ENCODE measurements at regions of chr1 and their contacts with region 1.

Region 1: DNA sequence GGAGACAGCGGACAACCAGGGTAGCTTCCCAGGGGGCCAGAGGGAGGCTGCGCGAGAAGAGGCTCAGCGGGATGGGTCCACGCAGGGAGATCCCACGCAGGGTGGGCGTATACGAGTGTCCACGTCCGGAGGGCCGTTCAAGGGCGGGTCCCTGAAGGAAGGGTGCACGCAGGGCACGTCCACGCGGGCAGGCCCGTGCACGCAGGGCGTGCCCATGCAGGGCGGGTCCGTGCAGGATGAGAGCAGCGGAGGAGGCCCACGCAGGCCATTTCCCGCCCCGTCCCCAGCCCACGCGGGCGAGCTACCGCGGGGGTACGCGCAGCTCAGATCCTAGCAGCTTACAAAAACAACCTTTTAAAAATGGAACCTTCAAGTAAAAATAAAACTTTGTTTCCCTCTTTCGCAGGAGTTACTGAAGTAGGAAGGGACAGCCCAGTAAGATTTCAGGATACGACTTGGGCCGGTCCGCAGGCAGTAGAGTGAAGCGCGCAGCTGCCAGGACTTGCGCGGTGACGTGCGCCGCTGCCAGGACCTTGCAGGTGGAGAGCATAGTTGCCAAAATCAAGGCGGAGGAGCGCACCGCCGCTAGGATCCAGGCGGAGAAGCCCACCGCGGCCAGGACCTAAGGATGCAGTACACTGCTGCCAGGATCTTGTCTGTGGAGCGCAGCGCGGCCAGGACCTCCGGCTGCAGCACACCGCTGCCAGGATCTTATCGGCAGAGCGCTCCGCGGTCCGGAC is 416 bp upstream of the RNF187 start:
- DNase-seq: peak; percentile 66 to 91 (median 78)
- ATAC-seq: peak; percentile 77
- H3K4me3 ChIP-seq: peak overlapping the region; percentile 85
- H3K4me3 Mint-ChIP-seq: peak overlapping the region; percentile 95
- H3K27ac ChIP-seq: peak overlapping the region; percentile 100
- H3K27ac Mint-ChIP-seq: peak overlapping the region; percentile 100
- H3K4me1 ChIP-seq: peaks cover 43% of the 10 kb centered on the region
- H3K4me1 Mint-ChIP-seq: peaks cover 43% of the 10 kb centered on the region
- H3K27me3 ChIP-seq: no peaks in the 10 kb centered on the region
- H3K27me3 Mint-ChIP-seq: no peaks in the 10 kb centered on the region
- CTCF ChIP-seq: no peak

Region 2: GRCh38 chr1:228212966-228213844 is 273.6 kb before region 1 on chr1:
- CTCF ChIA-PET with region 1: no interaction called
- POLR2A ChIA-PET with region 1: interaction called, 3 read pairs
- intact Hi-C with region 1: loop called in 1 of 2 experiments (anchors 2 kb)
- DNase-seq: peak; percentile 83 to 96 (median 90)
- ATAC-seq: peak; percentile 89
- H3K4me3 ChIP-seq: peak overlapping the region; percentile 64
- H3K4me3 Mint-ChIP-seq: peak overlapping the region; percentile 92
- H3K27ac ChIP-seq: peak overlapping the region in 1 of 2 donors; percentile 21
- H3K27ac Mint-ChIP-seq: peak overlapping the region; percentile 86
- H3K4me1 ChIP-seq: peaks cover 22% of the 10 kb centered on the region
- H3K4me1 Mint-ChIP-seq: peaks cover 12% of the 10 kb centered on the region
- H3K27me3 ChIP-seq: no peaks in the 10 kb centered on the region
- H3K27me3 Mint-ChIP-seq: no peaks in the 10 kb centered on the region
- CTCF ChIP-seq: peak; percentile 59

Region 3: GRCh38 chr1:228226956-228227791 is 259.6 kb before region 1 on chr1:
- CTCF ChIA-PET with region 1: no interaction called
- POLR2A ChIA-PET with region 1: no interaction called
- intact Hi-C with region 1: no loop called
- DNase-seq: no peak
- ATAC-seq: no peak
- H3K4me3 ChIP-seq: no peak overlapping the region
- H3K4me3 Mint-ChIP-seq: no peak overlapping the region
- H3K27ac ChIP-seq: no peak overlapping the region
- H3K27ac Mint-ChIP-seq: no peak overlapping the region
- H3K4me1 ChIP-seq: no peaks in the 10 kb centered on the region
- H3K4me1 Mint-ChIP-seq: peaks cover 8% of the 10 kb centered on the region
- H3K27me3 ChIP-seq: no peaks in the 10 kb centered on the region
- H3K27me3 Mint-ChIP-seq: no peaks in the 10 kb centered on the region
- CTCF ChIP-seq: no peak

Region 4: DNA sequence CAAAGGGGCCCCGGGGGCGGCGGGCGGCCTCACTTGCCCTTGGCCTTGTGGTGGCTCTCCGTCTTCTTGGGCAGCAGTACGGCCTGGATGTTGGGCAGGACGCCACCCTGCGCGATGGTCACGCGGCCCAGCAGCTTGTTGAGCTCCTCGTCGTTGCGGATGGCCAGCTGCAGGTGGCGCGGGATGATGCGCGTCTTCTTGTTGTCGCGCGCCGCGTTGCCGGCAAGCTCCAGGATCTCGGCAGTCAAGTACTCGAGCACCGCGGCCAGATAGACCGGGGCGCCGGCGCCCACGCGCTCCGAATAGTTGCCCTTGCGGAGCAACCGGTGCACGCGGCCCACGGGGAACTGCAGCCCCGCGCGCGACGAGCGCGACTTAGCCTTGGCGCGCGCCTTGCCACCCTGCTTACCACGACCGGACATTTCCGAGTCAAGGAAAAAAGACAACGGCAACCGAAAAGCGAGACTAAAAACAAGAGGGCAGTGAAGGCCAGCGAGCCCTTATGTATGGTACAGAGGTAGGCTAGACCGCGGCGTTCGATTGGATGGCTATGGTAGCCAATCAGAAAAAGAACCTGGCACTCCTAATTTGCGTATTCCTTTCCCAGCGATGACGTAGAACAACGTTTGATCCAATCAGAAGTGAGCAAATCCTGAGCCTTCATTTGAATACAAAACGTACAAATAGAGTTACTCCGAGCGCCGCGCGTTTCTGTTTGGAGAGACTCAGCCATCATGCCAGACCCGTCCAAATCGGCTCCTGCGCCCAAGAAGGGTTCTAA is 29.2 kb before region 1 on chr1:
- CTCF ChIA-PET with region 1: interaction called, 30 read pairs
- POLR2A ChIA-PET with region 1: interaction called, 90 read pairs
- intact Hi-C with region 1: loop called in 1 of 2 experiments (anchors 1 kb)
- DNase-seq: peak; percentile 68 to 99 (median 76)
- ATAC-seq: peak; percentile 83
- H3K4me3 ChIP-seq: peak overlapping the region; percentile 67
- H3K4me3 Mint-ChIP-seq: peak overlapping the region; percentile 95
- H3K27ac ChIP-seq: peak overlapping the region; percentile 68 to 94
- H3K27ac Mint-ChIP-seq: peak overlapping the region; percentile 98
- H3K4me1 ChIP-seq: peaks cover 30% of the 10 kb centered on the region
- H3K4me1 Mint-ChIP-seq: peaks cover 54% of the 10 kb centered on the region
- H3K27me3 ChIP-seq: no peaks in the 10 kb centered on the region
- H3K27me3 Mint-ChIP-seq: peaks cover 5% of the 10 kb centered on the region
- CTCF ChIP-seq: no peak

Region 5: GRCh38 chr1:228464487-228464983 is 22.2 kb before region 1 on chr1:
- CTCF ChIA-PET with region 1: interaction called, 3 read pairs
- POLR2A ChIA-PET with region 1: interaction called, 90 read pairs
- intact Hi-C with region 1: loop called (anchors 1 to 2 kb)
- DNase-seq: peak; percentile 77 to 96 (median 84)
- ATAC-seq: peak; percentile 97
- H3K4me3 ChIP-seq: peak overlapping the region; percentile 52
- H3K4me3 Mint-ChIP-seq: peak overlapping the region; percentile 88
- H3K27ac ChIP-seq: no peak overlapping the region
- H3K27ac Mint-ChIP-seq: peak overlapping the region; percentile 77
- H3K4me1 ChIP-seq: peaks cover 35% of the 10 kb centered on the region
- H3K4me1 Mint-ChIP-seq: peaks cover 41% of the 10 kb centered on the region
- H3K27me3 ChIP-seq: peaks cover 2 to 12% of the 10 kb centered on the region in 2 experiments
- H3K27me3 Mint-ChIP-seq: peaks cover 17% of the 10 kb centered on the region
- CTCF ChIP-seq: no peak

Region 6: DNA sequence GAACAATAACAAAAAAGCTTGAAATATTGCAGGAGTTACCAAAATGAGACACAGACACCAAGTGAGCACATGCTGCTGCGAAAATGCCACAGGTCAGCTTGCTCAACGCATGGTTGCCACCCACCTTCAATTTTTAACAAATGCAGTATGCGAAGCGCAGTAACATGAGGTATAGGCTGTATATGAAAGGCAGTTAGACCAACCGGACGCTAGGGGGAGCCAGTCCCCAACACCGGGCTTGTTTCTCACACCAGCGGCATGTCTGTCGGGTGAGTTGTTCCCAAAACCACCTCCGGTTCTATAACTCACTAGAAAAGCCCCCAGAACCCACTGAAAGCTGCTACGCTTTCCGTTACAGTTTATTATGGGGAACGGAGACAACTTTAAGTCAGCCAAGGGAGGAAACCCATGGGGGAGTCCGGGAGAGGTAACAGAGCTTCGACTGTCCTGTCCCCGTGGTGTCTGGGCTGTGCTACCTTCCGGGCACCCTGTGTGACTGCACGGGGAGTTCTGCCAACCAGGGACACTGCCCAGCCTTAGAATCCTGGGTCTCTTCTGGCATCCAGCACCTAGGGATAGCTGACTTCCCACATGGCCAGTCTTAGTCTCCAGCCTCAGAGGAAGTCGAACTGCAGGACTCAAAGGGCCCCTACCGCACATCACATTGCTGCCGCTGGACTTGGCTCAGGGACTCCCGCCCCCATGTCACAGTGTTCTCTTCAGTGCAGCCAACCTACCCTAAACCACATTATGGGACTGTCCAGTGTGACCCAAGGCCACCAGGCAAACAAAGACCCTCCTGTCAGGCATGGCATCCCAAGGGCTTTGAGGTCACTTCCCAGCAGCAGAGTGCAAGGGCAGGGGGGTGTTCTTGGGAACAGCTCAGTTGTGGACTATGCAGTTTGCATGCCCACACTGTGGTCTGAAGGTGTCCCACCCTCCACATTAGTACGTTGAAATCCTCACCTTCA is 14.4 kb after region 1 on chr1:
- CTCF ChIA-PET with region 1: interaction called, 17 read pairs
- POLR2A ChIA-PET with region 1: interaction called, 14 read pairs
- intact Hi-C with region 1: no loop called
- DNase-seq: peak; percentile 78 to 94 (median 83)
- ATAC-seq: peak; percentile 99
- H3K4me3 ChIP-seq: peak overlapping the region; percentile 28
- H3K4me3 Mint-ChIP-seq: peak overlapping the region; percentile 84
- H3K27ac ChIP-seq: no peak overlapping the region
- H3K27ac Mint-ChIP-seq: peak overlapping the region; percentile 55
- H3K4me1 ChIP-seq: peaks cover 19% of the 10 kb centered on the region
- H3K4me1 Mint-ChIP-seq: peaks cover 20% of the 10 kb centered on the region
- H3K27me3 ChIP-seq: peaks cover 0 to 3% of the 10 kb centered on the region in 2 experiments
- H3K27me3 Mint-ChIP-seq: no peaks in the 10 kb centered on the region
- CTCF ChIP-seq: peak; percentile 97